ENCODE measurements at regions of chr9 and their contacts with region 1.

Region 1: DNA sequence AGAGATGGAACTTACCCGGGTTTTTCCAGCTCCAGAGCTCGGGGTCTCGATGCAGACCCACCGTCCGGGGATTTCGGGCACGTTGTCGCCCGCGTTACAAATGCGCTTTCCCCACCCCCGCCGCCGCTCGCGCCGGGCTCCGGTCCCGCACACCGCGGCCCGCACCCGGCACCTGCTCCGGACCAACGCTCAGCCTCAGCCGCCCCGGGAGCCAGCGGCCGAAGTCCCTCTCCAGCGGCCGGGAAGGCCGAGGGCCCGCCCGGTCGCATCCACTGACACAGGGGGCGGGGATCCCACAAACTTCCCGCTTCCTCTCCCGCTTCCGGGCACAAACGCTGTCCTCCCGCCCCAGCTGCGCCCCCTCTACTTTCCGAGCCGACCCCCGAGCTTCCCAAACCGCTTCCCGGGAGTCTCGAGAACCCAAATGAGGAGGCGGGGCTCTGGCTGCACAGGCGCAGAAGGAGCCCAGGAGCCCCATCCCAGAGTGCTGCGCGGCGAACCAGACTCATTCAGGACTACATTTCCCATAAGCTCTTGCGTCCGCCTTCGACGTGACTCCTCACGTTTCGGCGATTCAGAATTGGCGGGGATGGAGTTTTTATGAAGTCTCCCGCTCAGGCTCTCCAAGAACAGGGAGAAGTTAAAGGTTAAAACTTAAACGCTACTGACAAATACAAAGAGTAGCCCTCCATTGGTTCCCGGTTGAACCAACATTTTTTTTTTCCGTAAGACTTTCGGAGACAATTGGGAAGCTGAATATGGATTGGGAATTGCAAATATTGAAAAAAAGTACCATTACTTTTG is at the start of gene ZNF782:
- DNase-seq: peak; percentile 97
- total RNA-seq, gene ZNF782: 3.0 TPM

Region 2: GRCh38 chr9:96436063-96436455 is 418.2 kb before region 1 on chr9:
- intact Hi-C with region 1: no loop called
- DNase-seq: no peak

Region 3: DNA sequence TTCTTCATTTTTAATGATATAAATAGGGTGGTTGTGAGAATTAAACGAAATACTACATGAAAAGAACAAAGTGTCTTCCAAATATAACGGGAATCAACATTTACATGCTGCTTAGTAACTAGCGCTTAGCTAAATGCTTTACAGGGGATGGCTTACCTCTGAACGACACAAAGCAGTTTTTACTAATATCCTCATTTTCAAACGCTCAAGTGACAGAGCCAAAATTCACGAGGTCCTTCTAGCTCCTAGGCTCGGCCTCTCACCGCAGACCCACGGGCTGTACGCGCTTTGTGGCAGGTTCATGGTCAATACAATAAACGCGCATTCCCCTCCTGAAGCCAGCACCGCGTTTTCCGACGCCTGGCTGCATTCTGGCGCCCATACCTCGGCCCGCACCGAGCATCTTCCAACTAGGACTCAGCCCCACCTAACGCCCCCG is 76.8 kb before region 1 on chr9:
- intact Hi-C with region 1: loop called (anchors 5 kb)
- DNase-seq: no peak

Region 4: DNA sequence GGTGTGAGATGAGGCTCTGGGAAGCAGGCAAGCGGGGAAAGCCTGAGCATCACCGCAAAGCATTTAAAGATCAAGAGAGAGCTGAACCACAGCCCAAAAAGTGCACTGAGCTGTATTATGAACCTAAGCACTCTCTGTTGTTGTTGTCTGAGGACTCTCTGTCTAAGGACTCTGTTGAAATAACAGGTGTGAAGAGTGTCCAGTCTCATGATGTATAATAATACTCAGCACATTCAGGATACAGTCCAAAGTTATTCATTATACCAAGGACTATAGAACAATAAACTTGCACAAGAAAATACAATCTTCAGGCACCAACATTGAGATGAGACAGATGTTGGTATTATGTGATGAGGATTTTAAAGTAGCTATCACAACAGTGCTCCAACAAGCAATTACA is 256.4 kb after region 1 on chr9:
- intact Hi-C with region 1: loop called (anchors 5 kb)
- DNase-seq: no peak

Region 5: GRCh38 chr9:97271292-97271691 is 417.0 kb after region 1 on chr9:
- intact Hi-C with region 1: no loop called
- DNase-seq: no peak

Region 6: DNA sequence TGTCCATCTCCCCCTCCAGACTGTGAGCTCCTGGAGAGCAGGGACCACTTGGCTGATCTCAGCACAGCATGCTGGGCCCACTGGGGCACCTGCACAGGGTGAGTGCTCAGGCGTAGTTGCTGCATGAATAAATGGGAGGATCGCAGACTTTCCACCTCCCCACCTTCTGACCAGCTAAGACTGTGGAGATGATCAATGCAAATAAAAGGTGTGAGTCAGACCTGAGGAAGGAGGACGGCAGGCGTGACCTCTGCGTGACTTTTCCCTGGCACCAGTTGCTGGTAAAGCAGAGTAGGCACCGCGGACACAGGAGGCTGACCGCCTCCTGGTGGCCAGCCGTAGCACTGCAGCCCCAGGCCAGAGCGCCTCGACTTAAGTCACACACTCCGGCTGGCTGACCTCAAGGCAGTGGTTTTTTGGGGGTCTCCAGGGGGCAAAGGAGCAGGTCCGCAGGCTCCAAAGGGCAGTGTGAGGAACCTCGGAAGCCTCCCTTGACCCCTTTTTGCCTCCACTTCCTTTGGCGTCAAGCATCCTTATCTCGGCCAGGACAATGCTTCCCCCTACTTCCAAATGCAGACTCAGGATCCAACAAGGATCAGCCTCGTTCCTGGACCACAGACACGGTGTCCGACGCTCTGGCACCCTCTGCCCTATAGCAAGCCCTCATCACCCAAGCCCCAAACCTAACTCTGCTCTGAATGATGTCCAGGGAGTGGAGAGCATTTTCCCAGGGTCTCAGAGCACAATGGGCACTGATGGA is 544.9 kb after region 1 on chr9:
- intact Hi-C with region 1: loop called (anchors 2 kb)
- DNase-seq: peak; percentile 87

Measured in cardiac septum (tissue), 1 donor.